Heart right ventricle (tissue), 16 donors: ENCODE measurements at regions of chr19 and their contacts with region 1.

Region 1: DNA sequence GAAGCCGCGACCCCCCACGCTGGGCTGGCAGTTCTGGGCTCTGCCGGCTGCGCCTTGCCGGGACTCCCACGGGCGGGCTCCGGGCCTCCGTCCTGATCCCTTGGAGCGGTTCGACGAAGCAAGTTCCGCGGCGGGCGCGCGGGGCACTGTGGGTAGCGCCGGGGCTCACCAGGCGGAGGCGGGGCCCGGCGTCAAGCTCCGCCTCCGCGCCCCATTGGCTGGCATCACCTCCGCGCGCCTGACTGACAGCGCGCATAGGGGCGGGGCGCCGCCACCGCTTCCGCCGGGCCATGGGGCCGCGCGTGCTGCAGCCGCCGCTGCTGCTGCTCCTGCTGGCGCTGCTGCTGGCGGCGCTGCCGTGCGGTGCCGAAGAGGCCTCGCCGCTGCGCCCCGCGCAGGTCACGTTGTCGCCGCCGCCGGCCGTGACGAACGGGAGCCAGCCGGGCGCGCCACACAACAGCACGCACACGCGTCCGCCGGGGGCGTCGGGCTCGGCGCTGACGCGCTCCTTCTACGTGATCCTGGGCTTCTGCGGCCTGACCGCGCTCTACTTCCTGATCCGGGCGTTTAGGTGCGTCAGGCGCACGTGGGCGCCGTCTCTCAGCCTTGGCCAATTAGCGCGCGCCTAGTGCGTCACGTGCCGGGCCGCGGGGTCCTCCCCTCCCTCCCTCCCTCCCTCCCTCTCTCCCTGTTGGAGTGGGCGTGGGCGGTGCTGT is at the start of gene FAM174C:
- DNase-seq: peak; percentile 95 to 96
- ATAC-seq: peak; percentile 68 to 93 (median 78)
- H3K4me3 ChIP-seq: peak within 1 kb of the TSS; percentile 42 to 91 (median 70)
- H3K27ac ChIP-seq: peak within 1 kb of the TSS; percentile 89 to 100 (median 98)
- H3K4me1 ChIP-seq: peaks cover 43 to 67% (median 63%) of the 10 kb centered on the region in 9 donors
- H3K27me3 ChIP-seq: no peaks in the 10 kb centered on the region
- CTCF ChIP-seq: no peak
- total RNA-seq, gene FAM174C: 8.2 to 19.0 (median 12.7) TPM

Region 2: DNA sequence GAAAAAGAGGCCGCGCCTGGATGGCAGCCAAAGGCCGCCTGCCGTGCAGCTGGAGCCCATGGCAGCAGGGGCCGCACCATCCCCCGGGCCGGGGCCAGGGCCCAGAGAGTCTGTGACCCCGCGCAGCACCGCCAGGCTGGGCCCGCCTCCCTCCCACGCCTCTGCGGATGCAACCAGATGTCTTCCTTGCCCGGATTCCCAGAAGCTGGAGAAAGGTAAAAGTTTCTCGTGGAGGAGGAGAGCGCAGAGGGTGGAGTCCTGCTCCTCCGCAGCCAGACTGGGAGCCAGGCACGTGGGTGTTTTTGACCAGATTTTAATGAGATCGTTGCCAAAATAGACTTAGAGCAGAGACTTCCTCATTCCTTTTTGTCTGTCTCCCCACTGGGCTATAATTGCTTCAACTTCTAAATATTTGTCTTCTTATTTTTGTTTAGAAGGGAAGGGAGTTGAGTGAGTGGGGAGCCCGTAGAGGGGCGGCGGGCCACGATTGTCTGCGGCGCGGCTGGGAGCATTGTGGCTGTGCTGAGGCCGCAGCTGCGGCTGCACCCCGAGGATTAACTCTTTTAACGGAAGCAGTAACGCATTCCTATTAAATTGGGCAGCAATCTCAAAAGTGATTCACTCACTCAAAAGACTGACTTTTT is 85.5 kb after region 1 on chr19:
- intact Hi-C with region 1: loop called in 4 of 10 experiments (anchors 5 to 10 kb)
- DNase-seq: peak; percentile 62 to 80
- ATAC-seq: peak; percentile 78 to 91 (median 80)
- H3K4me3 ChIP-seq: peak overlapping the region in 9 of 10 donors; percentile 4 to 40 (median 36)
- H3K27ac ChIP-seq: peak overlapping the region; percentile 20 to 81 (median 59)
- H3K4me1 ChIP-seq: peaks cover 12 to 40% (median 33%) of the 10 kb centered on the region in 9 donors
- H3K27me3 ChIP-seq: no peaks in the 10 kb centered on the region
- CTCF ChIP-seq: peak in 1 of 9 donors; percentile 6

Region 3: DNA sequence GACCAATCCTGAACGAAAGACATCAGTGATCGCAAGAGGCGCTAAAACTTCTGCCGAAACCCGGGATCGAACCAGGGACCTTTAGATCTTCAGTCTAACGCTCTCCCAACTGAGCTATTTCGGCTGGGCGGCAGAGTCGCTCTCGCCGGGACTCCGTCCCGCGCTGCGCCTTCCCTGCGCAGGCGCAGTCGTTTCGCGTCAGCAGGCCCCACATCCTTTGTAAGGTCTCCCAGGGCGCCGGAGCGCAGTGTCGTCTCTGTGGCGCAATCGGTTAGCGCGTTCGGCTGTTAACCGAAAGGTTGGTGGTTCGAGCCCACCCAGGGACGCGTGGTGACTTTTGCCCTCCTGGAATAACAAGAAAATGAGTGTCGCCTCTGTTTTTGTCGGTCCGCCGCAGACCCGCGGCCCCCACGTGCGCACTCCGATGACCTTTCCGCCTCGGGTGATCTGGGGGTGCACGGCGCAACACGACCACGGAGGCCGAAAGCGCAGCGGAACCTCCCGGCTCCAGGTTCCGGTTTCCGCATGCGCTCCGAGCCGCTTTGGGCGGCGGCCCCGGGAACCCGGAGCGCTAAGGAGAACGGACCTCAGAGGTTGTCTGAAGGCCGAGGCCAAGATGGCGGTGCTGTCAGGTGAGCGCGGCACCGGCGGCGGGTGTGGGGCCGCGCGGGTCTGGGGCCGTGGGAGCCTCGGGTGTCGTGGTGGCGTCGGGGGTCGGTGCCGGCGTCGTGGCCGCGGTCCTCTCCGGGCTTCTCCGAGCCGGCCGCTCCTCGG is 108.1 kb after region 1 on chr19 and contains the start of gene NDUFS7:
- intact Hi-C with region 1: loop called in 3 of 10 experiments (anchors 5 to 10 kb)
- DNase-seq: peak; percentile 88 to 90
- ATAC-seq: peak; percentile 85 to 93 (median 88)
- H3K4me3 ChIP-seq: peak within 1 kb of the TSS; percentile 76 to 100 (median 94)
- H3K27ac ChIP-seq: peak within 1 kb of the TSS; percentile 64 to 99 (median 97)
- H3K4me1 ChIP-seq: peaks cover 13 to 56% (median 42%) of the 10 kb centered on the region in 9 donors
- H3K27me3 ChIP-seq: no peaks in the 10 kb centered on the region
- CTCF ChIP-seq: peak in 3 of 9 donors; percentile 14 to 21 (median 18)
- total RNA-seq, gene NDUFS7: 248 to 446 (median 377) TPM

Region 4: DNA sequence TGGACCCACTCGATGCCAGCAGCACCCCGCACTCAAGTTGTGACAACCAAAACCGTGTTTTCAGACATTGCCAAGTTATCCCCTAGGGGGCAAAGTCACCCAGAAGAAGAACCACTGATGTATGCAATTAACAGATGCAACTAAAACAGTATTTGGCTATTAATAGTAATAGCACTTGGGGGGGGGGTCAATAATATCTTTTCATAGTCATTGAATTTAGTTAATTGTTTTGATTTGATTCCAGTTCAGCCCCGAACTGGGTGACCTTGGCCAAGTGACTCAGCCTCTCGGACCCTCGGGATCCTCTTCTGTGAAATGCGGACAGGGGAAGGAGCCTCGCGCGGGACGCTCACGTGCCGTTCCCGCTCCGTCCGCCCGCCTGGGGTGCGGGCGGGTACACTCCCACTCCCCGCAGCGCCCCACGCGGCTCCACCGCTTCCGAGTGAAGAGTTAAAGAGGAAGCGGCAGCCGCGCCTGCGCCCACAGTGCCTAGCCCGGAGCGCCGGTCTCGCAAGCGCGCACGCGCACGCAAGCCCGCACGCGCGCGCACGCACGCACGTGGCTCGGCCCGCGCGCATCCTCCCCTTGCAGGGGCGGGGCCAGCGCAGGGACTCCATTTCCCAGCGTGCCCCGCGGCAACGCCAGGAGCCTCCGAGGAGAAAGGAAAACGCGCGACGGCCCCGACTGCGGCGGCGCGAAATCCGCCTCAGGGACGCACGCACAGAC is 131.5 kb after region 1 on chr19:
- intact Hi-C with region 1: loop called in 5 of 10 experiments (anchors 1 to 10 kb)
- DNase-seq: peak; percentile 99 to 100
- ATAC-seq: peak; percentile 87 to 94 (median 92)
- H3K4me3 ChIP-seq: peak overlapping the region; percentile 12 to 99 (median 76)
- H3K27ac ChIP-seq: peak overlapping the region in 9 of 10 donors; percentile 68 to 98 (median 82)
- H3K4me1 ChIP-seq: peaks cover 28 to 61% (median 40%) of the 10 kb centered on the region in 9 donors
- H3K27me3 ChIP-seq: peaks cover 0 to 20% (median 0%) of the 10 kb centered on the region in 7 donors
- CTCF ChIP-seq: peak in 6 of 9 donors; percentile 24 to 45 (median 36)

Region 5: GRCh38 chr19:1507763-1508509 is 232.5 kb after region 1 on chr19:
- intact Hi-C with region 1: loop called in 2 of 10 experiments (anchors 5 to 10 kb)
- DNase-seq: peak; percentile 88 to 95
- ATAC-seq: peak; percentile 84 to 96 (median 91)
- H3K4me3 ChIP-seq: peak overlapping the region in 9 of 10 donors; percentile 22 to 52 (median 42)
- H3K27ac ChIP-seq: peak overlapping the region; percentile 69 to 88 (median 76)
- H3K4me1 ChIP-seq: peaks cover 4 to 62% (median 28%) of the 10 kb centered on the region in 9 donors
- H3K27me3 ChIP-seq: peaks cover 0 to 49% (median 13%) of the 10 kb centered on the region in 7 donors
- CTCF ChIP-seq: no peak